Activated T-helper 1 cell treated with anti-CD3 and anti-CD28 coated beads, Interleukin-12 subunit alpha, Interleukin-12 subunit beta, Interleukin-2, Interleukin-4 antibody, amounts not matched to agents 30 ng/mL and 10 ng/mL and 1 ng/mL, durations not matched to agents 14 hours and 24 hours and 36 hours (primary cell): ENCODE measurements at regions of chr2 and their contacts with region 1.

Region 1: GRCh38 chr2:19347619-19348562 is 10.5 kb downstream of the OSR1 start:
- DNase-seq: peak; percentile 98
- H3K4me3 Mint-ChIP-seq: peak overlapping the region; percentile 95
- H3K27ac Mint-ChIP-seq: peak overlapping the region; percentile 96
- H3K4me1 Mint-ChIP-seq: peaks cover 24% of the 10 kb centered on the region
- H3K27me3 Mint-ChIP-seq: peaks cover 36% of the 10 kb centered on the region

Region 2: GRCh38 chr2:17879101-17879912 is 1468.6 kb before region 1 on chr2:
- intact Hi-C with region 1: loop called (anchors 10 kb)
- DNase-seq: no peak
- H3K4me3 Mint-ChIP-seq: peak overlapping the region; percentile 73
- H3K27ac Mint-ChIP-seq: no peak overlapping the region
- H3K4me1 Mint-ChIP-seq: peaks cover 5% of the 10 kb centered on the region
- H3K27me3 Mint-ChIP-seq: peaks cover 56% of the 10 kb centered on the region

Region 3: GRCh38 chr2:18701981-18702380 is 645.9 kb before region 1 on chr2:
- intact Hi-C with region 1: no loop called
- DNase-seq: no peak
- H3K4me3 Mint-ChIP-seq: no peak overlapping the region
- H3K27ac Mint-ChIP-seq: no peak overlapping the region
- H3K4me1 Mint-ChIP-seq: no peaks in the 10 kb centered on the region
- H3K27me3 Mint-ChIP-seq: peaks cover 3% of the 10 kb centered on the region

Region 4: DNA sequence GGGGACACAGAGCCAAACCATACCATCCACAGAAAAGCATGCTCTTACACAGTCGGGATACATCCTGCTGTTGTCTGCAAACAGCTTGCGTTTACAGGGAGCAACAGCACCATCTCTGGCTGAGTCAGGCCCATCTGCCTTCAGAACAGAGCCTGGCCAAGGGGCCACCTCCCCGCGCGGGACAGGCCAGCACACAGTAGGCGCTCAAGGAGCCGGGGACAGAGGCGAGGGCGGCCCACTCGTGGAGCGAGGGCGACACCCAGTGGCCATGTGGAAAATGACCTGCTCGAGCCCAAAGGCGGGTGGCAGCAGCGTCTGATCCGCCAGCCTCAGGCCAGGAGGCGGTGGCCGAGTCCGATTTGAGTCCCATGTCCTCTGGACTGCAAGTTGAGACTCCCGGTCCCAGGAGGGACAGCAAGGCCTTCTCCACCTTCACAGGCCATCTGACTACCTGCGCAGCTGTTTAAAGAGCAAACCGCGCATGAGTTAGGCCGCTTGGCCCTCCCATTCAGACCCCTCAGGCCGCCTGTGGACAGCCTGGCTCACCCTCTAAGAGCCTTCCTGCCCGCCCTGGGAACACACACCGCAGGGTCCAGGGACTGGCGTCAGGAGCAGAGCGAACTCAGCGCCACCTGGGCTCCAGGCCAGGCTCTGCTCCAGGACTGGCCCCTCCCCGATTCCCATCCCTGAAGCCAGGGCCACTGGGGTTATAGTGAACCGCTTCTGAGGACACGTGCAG is 515.6 kb after region 1 on chr2:
- intact Hi-C with region 1: loop called (anchors 2 kb)
- DNase-seq: peak; percentile 49
- H3K4me3 Mint-ChIP-seq: no peak overlapping the region
- H3K27ac Mint-ChIP-seq: no peak overlapping the region
- H3K4me1 Mint-ChIP-seq: peaks cover 31% of the 10 kb centered on the region
- H3K27me3 Mint-ChIP-seq: peaks cover 11% of the 10 kb centered on the region

Region 5: DNA sequence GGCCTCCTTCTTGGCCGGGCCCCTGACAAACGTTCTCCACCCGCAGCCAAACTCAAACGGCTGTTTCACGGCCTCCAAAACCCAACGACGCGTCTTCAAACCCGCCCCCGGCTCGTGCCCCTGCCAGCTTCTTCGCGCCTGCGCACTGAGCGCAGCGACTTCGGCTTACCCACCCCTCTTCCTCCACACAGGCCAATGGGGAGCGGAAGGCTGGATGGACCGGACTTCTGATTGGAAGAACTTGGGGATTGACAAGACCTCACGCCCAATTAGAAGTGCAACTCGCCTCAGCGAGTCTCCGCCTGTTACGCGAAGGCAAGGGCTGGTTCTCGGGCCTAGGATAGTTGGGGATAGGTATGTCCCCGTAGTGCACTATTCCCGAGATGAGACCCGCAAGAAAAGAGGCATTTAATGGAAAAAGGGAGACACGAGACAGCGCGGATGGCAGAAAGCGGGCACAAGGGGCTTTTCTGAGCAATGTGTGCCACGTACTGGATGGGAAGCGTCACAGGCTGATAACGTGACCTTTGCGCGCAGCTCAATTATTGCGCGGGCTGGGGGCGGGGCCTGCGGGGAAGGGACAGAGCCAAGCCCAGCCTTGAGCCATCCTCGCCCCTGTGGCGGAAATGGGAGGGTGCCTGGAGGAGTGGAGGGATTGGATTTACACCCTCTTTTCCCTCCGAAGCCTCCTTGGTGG is 703.8 kb after region 1 on chr2 and contains the start of gene LAPTM4A:
- intact Hi-C with region 1: loop called (anchors 2 kb)
- DNase-seq: peak; percentile 97
- H3K4me3 Mint-ChIP-seq: no peak within 1 kb of the TSS
- H3K27ac Mint-ChIP-seq: no peak within 1 kb of the TSS
- H3K4me1 Mint-ChIP-seq: peaks cover 26% of the 10 kb centered on the region
- H3K27me3 Mint-ChIP-seq: peaks cover 14% of the 10 kb centered on the region
- total RNA-seq, gene LAPTM4A: 25.5 and 29.1 TPM in 2 replicates

Region 6: GRCh38 chr2:20446917-20447436 is 1099.1 kb after region 1 on chr2 and contains the start of gene RHOB:
- intact Hi-C with region 1: loop called (anchors 2 kb)
- DNase-seq: peak; percentile 89
- H3K4me3 Mint-ChIP-seq: peak within 1 kb of the TSS; percentile 81
- H3K27ac Mint-ChIP-seq: peak within 1 kb of the TSS; percentile 61
- H3K4me1 Mint-ChIP-seq: peaks cover 12% of the 10 kb centered on the region
- H3K27me3 Mint-ChIP-seq: peaks cover 64% of the 10 kb centered on the region
- total RNA-seq, gene RHOB: 27.6 and 29.6 TPM in 2 replicates